BJ (cell line): ENCODE measurements at regions of chr6 and their contacts with region 1.

Region 1: GRCh38 chr6:45746046-45746445 is 269.6 kb downstream of the CLIC5 start:
- DNase-seq: no peak
- H3K4me3 ChIP-seq: no peak overlapping the region
- H3K27me3 ChIP-seq: no peaks in the 10 kb centered on the region; the same call in 1 of the 2 replicates
- CTCF ChIP-seq: no peak

Region 2: GRCh38 chr6:45305546-45305945 is 440.5 kb before region 1 on chr6:
- CTCF ChIA-PET with region 1: no interaction called
- POLR2A ChIA-PET with region 1: interaction called, 19 read pairs
- DNase-seq: no peak
- H3K4me3 ChIP-seq: no peak overlapping the region
- H3K27me3 ChIP-seq: no peaks in the 10 kb centered on the region
- CTCF ChIP-seq: no peak

Region 3: DNA sequence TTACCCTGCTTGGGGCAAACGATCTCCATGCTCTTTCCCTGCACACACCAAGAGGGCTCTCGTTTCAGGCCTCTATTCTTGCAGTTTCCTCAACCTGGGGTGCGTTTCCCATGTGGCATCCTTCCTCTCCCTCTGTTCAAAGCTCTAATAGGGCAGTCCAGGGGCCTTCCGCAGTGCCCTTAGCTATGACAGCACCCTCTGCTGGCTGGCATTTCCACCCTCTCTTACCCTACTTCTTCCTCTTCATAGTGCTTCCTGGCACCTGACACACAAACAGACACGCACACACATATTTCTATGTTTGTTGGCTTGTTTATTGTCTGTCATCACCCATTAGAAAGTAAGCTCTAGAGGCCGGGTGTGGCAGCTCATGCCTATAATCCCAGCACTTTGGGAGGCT is 24.4 kb before region 1 on chr6:
- CTCF ChIA-PET with region 1: no interaction called
- POLR2A ChIA-PET with region 1: no interaction called
- DNase-seq: no peak
- H3K4me3 ChIP-seq: no peak overlapping the region
- H3K27me3 ChIP-seq: no peaks in the 10 kb centered on the region
- CTCF ChIP-seq: no peak